Astrocyte of the cerebellum (primary cell): ENCODE measurements at regions of chr17 and their contacts with region 1.

Region 1: GRCh38 chr17:55285340-55286301 is 20.9 kb downstream of the HLF start:
- DNase-seq: peak; percentile 52
- H3K4me3 ChIP-seq: no peak overlapping the region
- CTCF ChIP-seq: no peak

Region 2: GRCh38 chr17:54996441-54996840 is 289.2 kb before region 1 on chr17:
- in situ Hi-C with region 1: loop called (anchors 5 kb)
- DNase-seq: no peak
- H3K4me3 ChIP-seq: no peak overlapping the region
- CTCF ChIP-seq: no peak

Region 3: GRCh38 chr17:55190748-55191147 is 94.9 kb before region 1 on chr17:
- in situ Hi-C with region 1: no loop called
- DNase-seq: no peak
- H3K4me3 ChIP-seq: no peak overlapping the region
- CTCF ChIP-seq: no peak

Region 4: DNA sequence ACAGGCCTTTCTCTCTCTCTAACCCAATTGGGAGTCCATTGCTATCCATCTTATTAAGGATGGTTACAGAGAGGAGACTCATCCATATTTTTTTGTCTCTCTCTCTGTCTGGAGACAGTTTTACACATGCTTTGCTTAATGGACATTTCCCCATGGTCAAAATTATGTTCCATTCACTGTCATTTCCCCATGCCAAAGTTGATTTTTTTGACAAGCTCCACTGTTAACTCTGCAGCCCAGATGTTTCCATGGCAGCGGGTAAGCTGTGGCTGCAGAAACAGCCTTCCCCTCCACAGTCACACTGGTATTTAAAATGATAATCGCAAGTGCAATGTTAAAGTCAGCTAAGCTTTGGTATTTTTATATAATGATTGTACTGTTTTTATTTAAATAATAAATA is 84.7 kb before region 1 on chr17:
- in situ Hi-C with region 1: no loop called
- DNase-seq: no peak
- H3K4me3 ChIP-seq: no peak overlapping the region
- CTCF ChIP-seq: no peak

Region 5: GRCh38 chr17:55320594-55321426 is 35.2 kb after region 1 on chr17:
- in situ Hi-C with region 1: no loop called
- DNase-seq: no peak
- H3K4me3 ChIP-seq: no peak overlapping the region
- CTCF ChIP-seq: no peak

Region 6: DNA sequence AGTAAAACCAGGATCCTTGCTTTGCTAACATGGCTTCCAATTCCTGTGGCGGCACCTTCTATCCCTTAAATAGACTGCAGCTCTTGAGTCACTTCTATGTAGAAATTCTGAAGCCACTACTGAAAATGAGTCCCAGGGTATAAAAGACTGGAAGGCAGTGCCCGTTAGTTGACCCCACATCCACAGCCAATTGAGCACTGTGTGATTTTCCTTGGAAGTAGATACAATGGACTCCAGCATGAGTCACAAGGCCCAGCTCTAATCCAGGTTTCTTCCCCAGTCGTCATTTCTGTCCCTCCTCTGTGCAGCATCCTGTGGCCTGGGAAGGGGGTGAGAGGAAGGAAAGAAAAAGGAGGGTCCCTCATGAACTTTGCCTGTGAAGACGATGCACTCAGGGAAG is 48.7 kb after region 1 on chr17:
- in situ Hi-C with region 1: no loop called
- DNase-seq: no peak
- H3K4me3 ChIP-seq: no peak overlapping the region
- CTCF ChIP-seq: no peak